ENCODE measurements at regions of chr3 and their contacts with region 1.

Region 1: GRCh38 chr3:47612178-47612577 is 33.5 kb upstream of the CSPG5 start:
- DNase-seq: no peak
- ATAC-seq: peak; percentile 45 to 74 (median 62)
- H3K4me3 ChIP-seq: no peak overlapping the region
- H3K27ac ChIP-seq: peak overlapping the region; percentile 51
- H3K4me1 ChIP-seq: peaks cover 35% of the 10 kb centered on the region
- H3K27me3 ChIP-seq: no peaks in the 10 kb centered on the region
- CTCF ChIP-seq: no peak

Region 2: DNA sequence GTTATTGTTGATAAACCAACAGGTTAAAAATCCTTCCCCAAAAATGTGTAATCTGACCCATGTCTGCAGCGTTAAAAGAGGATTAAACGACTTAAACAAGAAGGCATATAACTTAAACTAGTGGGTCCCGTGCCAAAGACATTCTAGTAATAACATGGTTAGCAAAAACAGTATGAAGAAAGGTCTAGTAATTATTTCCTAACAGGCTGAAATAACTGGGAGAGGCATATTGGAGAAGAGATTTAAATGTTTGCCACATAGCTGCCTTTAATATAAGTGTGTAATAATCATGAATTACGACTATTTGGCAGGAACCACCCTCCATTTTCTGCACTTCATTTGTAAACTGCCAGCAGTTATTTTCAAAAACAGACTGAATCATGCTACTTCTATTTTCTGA is 34.2 kb after region 1 on chr3:
- intact Hi-C with region 1: loop called in 1 of 2 experiments (anchors 5 kb)
- DNase-seq: no peak
- ATAC-seq: no peak
- H3K4me3 ChIP-seq: no peak overlapping the region
- H3K27ac ChIP-seq: no peak overlapping the region
- H3K4me1 ChIP-seq: peaks cover 17% of the 10 kb centered on the region
- H3K27me3 ChIP-seq: no peaks in the 10 kb centered on the region
- CTCF ChIP-seq: no peak